Activated T-helper 1 cell treated with anti-CD3 and anti-CD28 coated beads, Interleukin-12 subunit alpha, Interleukin-12 subunit beta, Interleukin-2, Interleukin-4 antibody, amounts not matched to agents 30 ng/mL and 10 ng/mL and 1 ng/mL, durations not matched to agents 14 hours and 24 hours and 36 hours (primary cell): ENCODE measurements at regions of chr6 and their contacts with region 1.

Region 1: DNA sequence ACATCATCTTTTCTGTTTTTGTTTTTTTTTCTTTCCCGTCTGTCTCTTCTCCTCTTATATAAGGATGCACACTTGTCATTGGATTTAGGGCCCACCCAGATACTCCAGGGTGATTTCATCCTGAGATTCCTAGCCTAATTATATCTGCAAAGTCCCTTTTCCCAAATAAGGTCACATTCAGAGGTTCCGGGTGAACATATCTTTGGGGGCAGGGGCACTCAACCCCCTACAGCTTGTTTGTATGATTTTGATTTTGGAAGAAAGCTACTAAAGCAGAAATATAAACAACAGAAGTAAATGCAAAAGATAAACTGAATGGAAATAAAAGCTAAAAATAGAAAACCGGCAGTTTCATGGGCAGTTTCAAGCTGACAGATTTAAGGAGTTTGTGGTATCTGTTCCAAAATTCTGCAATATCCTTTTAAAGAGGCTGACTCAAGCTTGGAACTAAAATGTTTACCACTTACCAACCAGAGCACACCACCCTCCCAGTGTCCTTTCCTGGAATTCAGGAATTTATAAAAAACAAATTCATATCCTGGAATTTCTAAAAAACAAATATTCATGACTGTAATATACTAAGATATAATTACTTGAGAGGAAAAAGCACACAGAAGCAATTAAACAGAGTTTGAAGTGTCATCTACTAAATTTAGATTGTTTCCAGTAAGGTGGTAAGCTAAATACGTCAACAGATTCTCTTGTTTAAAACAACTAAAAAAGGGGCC is 100.0 kb upstream of the CARMIL1 start:
- DNase-seq: no peak
- H3K4me3 Mint-ChIP-seq: peak overlapping the region; percentile 70
- H3K27ac Mint-ChIP-seq: peak overlapping the region; percentile 93
- H3K4me1 Mint-ChIP-seq: peaks cover 90% of the 10 kb centered on the region
- H3K27me3 Mint-ChIP-seq: no peaks in the 10 kb centered on the region

Region 2: DNA sequence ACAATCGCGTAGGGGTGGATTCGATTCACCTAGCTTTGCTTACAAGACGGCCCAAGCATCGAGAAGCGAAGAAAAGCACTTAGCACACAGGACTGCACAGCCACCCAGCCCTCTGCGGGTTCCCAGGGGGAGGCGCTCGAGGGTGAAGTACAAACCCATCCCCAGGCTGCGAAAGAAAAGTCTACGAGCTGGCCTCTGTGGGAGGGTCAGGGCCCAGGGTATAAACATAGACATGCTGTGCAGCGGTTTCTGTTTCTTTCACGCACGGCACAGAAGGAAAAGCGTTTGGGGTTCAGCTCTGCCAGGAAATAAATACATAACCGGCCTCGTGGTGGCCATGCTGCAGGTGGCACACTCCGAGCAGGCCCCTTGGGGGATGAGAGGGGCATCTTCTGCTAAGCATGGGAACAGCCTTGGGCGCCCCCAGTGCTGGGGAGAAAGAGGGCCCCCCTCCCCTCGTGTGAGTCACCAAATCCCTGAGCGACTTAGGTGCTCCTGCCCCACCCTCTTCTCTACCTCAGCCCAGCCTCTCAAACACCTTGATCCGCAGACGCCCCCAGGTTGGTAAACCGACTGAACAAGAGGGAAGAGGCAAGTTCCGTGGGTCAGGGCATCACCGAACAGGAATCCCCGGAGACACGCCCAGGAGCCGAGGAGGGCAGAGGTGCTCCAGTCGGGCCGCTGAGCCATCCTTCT is 151.8 kb before region 1 on chr6:
- intact Hi-C with region 1: loop called (anchors 2 kb)
- DNase-seq: peak; percentile 72
- H3K4me3 Mint-ChIP-seq: peak overlapping the region; percentile 74
- H3K27ac Mint-ChIP-seq: peak overlapping the region; percentile 83
- H3K4me1 Mint-ChIP-seq: peaks cover 48% of the 10 kb centered on the region
- H3K27me3 Mint-ChIP-seq: no peaks in the 10 kb centered on the region

Region 3: GRCh38 chr6:25122001-25122400 is 57.2 kb before region 1 on chr6:
- intact Hi-C with region 1: loop called (anchors 1 kb)
- DNase-seq: no peak
- H3K4me3 Mint-ChIP-seq: no peak overlapping the region
- H3K27ac Mint-ChIP-seq: no peak overlapping the region
- H3K4me1 Mint-ChIP-seq: peaks cover 72% of the 10 kb centered on the region
- H3K27me3 Mint-ChIP-seq: no peaks in the 10 kb centered on the region

Region 4: DNA sequence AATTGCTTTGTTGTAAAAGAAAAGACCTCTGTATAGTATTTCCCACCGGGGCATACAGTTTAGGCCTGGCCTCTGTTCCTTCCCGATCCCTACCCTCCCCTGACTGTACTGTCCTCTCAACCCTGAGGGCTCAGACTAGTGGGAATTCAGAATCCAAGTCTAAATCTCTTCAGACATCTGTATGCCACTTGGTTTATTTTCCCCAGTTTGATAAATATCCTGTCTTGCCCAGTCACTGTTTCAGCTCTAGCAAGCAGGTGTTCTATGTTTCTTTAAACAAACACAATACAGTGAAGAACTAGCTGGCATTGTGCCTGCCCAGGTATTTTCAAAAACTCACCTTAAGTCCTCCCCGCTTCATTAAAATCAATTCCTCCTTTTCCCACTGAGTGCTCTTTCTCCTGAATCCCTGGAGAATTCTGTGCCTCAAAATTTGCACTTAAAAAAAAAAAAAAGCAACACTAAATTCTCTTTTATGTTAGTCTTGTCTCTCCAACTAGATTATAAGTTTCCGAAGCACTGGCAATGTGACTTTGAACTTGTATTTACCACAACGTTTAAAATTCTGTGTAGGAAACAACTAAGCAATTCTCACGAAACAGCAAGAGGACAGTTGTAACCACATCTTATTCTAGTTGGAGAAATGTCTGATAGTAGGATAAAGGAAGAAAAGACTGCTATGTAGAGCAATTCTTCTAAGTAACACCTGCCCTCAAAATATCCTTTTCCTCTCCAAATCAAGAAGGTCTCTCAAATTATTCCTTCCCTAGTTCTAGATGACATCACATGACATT is 12.1 kb before region 1 on chr6:
- intact Hi-C with region 1: loop called (anchors 1 kb)
- DNase-seq: no peak
- H3K4me3 Mint-ChIP-seq: peak overlapping the region; percentile 90
- H3K27ac Mint-ChIP-seq: peak overlapping the region; percentile 96
- H3K4me1 Mint-ChIP-seq: peaks cover 74% of the 10 kb centered on the region
- H3K27me3 Mint-ChIP-seq: no peaks in the 10 kb centered on the region